HepG2 (cell line): ENCODE measurements at regions of chr2 and their contacts with region 1.

Region 1: GRCh38 chr2:200670313-200670712 is 84.5 kb downstream of the AOX1 start:
- DNase-seq: no peak
- ATAC-seq: peak; percentile 78
- H3K4me3 ChIP-seq: no peak overlapping the region
- H3K27ac ChIP-seq: no peak overlapping the region
- H3K4me1 ChIP-seq: peaks cover 17% of the 10 kb centered on the region
- H3K27me3 ChIP-seq: no peaks in the 10 kb centered on the region
- CTCF ChIP-seq: peak; percentile 45
- EP300 ChIP-seq: no peak
- POLR2A ChIP-seq: no peak
- RAD21 ChIP-seq: 0 out of 2 replicates have a peak, but pooled peaks have one; percentile 38

Region 2: DNA sequence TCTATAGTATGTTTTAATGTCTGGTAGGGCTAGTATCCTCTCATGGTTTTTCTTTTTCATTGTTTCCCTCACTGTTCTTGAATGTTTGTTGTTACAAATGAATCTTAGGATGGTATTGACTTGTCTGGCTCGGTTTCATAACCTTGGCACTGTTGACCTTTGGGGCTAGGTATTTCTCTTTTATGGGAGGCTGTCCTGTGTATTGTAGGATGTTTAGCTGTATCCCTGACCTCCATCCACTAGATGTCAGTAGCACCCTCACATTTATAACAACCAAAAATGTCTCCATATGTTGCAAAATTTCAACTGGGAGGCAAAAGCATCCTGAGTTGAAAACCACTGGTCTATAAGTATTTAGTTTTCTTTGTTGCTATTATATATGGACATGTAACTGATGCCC is 91.5 kb before region 1 on chr2:
- CTCF ChIA-PET with region 1: interaction called, 15 read pairs
- POLR2A ChIA-PET with region 1: no interaction called
- in situ Hi-C with region 1: no loop called
- intact Hi-C with region 1: loop called (anchors 1 kb)
- DNase-seq: peak; percentile 83
- ATAC-seq: peak; percentile 100
- H3K4me3 ChIP-seq: no peak overlapping the region
- H3K27ac ChIP-seq: no peak overlapping the region
- H3K4me1 ChIP-seq: peaks cover 8% of the 10 kb centered on the region
- H3K27me3 ChIP-seq: no peaks in the 10 kb centered on the region
- CTCF ChIP-seq: peak; percentile 88
- EP300 ChIP-seq: peak in 1 of 2 experiments; percentile 44; a peak in 1 of 4 replicates
- POLR2A ChIP-seq: no peak
- RAD21 ChIP-seq: peak; percentile 84

Region 3: GRCh38 chr2:200703127-200703925 is 33.0 kb after region 1 on chr2:
- CTCF ChIA-PET with region 1: no interaction called
- POLR2A ChIA-PET with region 1: no interaction called
- in situ Hi-C with region 1: no loop called
- intact Hi-C with region 1: no loop called
- DNase-seq: peak; percentile 77
- ATAC-seq: peak; percentile 64
- H3K4me3 ChIP-seq: no peak overlapping the region; a peak in 1 of 6 replicates
- H3K27ac ChIP-seq: peak overlapping the region; percentile 53
- H3K4me1 ChIP-seq: peaks cover 27% of the 10 kb centered on the region
- H3K27me3 ChIP-seq: no peaks in the 10 kb centered on the region
- CTCF ChIP-seq: peak; percentile 70
- EP300 ChIP-seq: no peak
- POLR2A ChIP-seq: no peak
- RAD21 ChIP-seq: peak; percentile 73

Region 4: GRCh38 chr2:200728630-200729029 is 58.3 kb after region 1 on chr2:
- CTCF ChIA-PET with region 1: no interaction called
- POLR2A ChIA-PET with region 1: no interaction called
- in situ Hi-C with region 1: no loop called
- intact Hi-C with region 1: no loop called
- DNase-seq: no peak
- ATAC-seq: no peak; the same call in 2 of the 3 replicates
- H3K4me3 ChIP-seq: no peak overlapping the region
- H3K27ac ChIP-seq: no peak overlapping the region
- H3K4me1 ChIP-seq: no peaks in the 10 kb centered on the region
- H3K27me3 ChIP-seq: peaks cover 2 to 31% of the 10 kb centered on the region in 2 experiments; a peak in 3 of 5 replicates
- CTCF ChIP-seq: no peak
- EP300 ChIP-seq: no peak
- POLR2A ChIP-seq: no peak
- RAD21 ChIP-seq: no peak

Region 5: DNA sequence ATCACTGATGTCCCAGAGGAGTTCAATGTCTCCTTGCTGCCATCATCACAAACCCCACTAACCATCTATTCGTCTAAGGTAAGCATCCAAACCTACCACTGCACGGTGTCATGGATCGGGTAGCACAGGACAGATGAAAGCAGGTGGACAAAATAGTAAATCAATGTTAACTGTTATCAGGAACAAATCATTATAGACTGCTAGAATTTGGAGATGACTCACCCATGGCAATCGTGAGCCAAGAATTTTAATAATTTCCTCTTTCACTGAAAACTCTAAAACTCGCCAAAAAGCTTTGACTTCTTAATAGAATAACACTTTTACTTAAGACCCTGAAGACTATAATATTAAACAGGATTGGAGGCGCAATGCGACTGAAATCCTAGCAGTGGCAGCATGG is 107.7 kb after region 1 on chr2:
- CTCF ChIA-PET with region 1: no interaction called
- POLR2A ChIA-PET with region 1: no interaction called
- in situ Hi-C with region 1: no loop called
- intact Hi-C with region 1: no loop called
- DNase-seq: no peak
- ATAC-seq: no peak
- H3K4me3 ChIP-seq: no peak overlapping the region
- H3K27ac ChIP-seq: no peak overlapping the region
- H3K4me1 ChIP-seq: peaks cover 30% of the 10 kb centered on the region
- H3K27me3 ChIP-seq: no peaks in the 10 kb centered on the region; a peak in 2 of 5 replicates
- CTCF ChIP-seq: no peak
- EP300 ChIP-seq: no peak
- POLR2A ChIP-seq: no peak
- RAD21 ChIP-seq: no peak